ENCODE measurements at regions of chr12 and their contacts with region 1.

Region 1: DNA sequence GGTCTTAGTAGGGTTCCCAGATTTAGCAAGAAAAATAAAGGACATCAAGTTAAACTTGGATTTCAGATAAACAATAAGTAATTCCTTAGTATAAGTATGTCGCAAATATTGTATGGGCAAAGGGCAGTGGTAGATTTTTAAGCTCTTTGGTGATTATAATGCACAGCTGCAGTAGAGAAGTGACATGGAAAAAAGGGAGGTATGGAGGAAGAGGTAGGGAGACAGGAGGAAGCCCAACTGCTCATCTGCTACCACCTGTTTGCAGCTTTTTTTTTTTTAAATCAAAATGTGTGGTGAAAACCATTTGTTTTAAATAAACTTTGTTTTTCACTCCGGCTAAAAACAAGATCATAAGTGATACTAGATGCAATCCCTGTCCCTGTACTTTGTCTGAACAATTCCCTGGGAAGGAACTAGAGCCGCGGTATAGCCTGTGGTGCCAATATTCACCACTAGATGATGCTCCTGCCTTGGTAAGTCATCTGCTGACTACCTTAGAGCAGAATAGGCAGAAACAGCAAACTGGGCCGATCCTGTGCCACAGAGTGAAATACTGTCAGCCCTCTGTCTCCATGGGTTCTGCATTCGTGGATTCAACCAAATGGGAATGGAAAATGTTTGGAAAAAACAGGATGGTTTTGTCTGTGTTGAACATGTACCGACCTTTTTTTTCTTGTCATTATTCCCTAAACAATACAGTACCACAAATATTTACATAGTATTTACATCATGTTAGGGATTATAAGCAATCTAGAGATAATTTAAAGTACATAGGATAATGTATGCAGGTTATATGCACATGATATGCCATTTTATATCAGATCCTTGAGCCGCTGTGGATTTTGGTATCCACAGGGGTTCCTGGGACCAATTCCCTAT is 62.4 kb upstream of the PLBD1 start:
- DNase-seq: peak; percentile 25 to 71 (median 55)
- ATAC-seq: peak; percentile 99
- H3K4me3 ChIP-seq: no peak overlapping the region
- H3K4me3 Mint-ChIP-seq: no peak overlapping the region
- H3K27ac ChIP-seq: no peak overlapping the region
- H3K27ac Mint-ChIP-seq: no peak overlapping the region
- H3K4me1 ChIP-seq: no peaks in the 10 kb centered on the region
- H3K4me1 Mint-ChIP-seq: no peaks in the 10 kb centered on the region
- H3K27me3 ChIP-seq: no peaks in the 10 kb centered on the region
- H3K27me3 Mint-ChIP-seq: peaks cover 0 to 35% (median 7%) of the 10 kb centered on the region in 5 donors

Region 2: GRCh38 chr12:14643251-14643650 is 13.2 kb after region 1 on chr12:
- CTCF ChIA-PET with region 1: interaction called, 4 read pairs
- POLR2A ChIA-PET with region 1: no interaction called
- intact Hi-C with region 1: loop called in 1 of 2 experiments (anchors 2 kb)
- DNase-seq: peak in 6 of 9 donors; percentile 29 to 52 (median 42)
- ATAC-seq: peak; percentile 46
- H3K4me3 ChIP-seq: no peak overlapping the region
- H3K4me3 Mint-ChIP-seq: peak overlapping the region; percentile 35 to 79 (median 71)
- H3K27ac ChIP-seq: no peak overlapping the region
- H3K27ac Mint-ChIP-seq: peak overlapping the region; percentile 8 to 83 (median 54)
- H3K4me1 ChIP-seq: peaks cover 14 to 21% of the 10 kb centered on the region in 2 donors
- H3K4me1 Mint-ChIP-seq: peaks cover 15 to 26% (median 24%) of the 10 kb centered on the region in 7 donors
- H3K27me3 ChIP-seq: no peaks in the 10 kb centered on the region
- H3K27me3 Mint-ChIP-seq: peaks cover 0 to 9% (median 0%) of the 10 kb centered on the region in 5 donors

Region 3: DNA sequence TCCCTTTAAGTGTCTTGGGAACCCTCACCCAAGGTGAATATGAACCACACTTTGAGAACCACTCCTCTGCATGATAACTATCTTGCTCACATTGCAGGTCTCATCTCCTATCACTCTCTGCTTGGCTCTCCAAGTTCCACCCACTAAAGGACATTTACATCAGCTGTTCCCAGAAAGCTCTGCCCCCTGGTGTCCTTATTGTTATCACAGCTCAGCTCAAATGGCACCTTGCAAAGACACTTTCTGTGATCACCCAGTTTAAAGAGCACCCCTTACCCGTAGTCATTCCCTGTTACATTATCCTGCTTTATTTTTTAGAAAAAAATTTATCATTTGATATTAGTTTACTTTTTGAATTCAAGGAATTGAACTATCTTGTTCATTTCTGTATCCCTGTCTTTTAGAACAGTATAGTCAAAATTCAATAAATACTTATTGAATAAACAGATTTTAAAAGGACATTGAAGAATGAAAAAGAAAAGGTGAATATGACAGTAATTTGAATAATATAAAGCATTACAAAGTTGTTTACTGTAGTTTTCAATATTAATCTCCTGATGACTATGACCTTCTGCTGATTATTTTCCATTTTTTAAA is 86.9 kb after region 1 on chr12:
- CTCF ChIA-PET with region 1: interaction called, 6 read pairs
- POLR2A ChIA-PET with region 1: no interaction called
- intact Hi-C with region 1: loop called (anchors 1 kb)
- DNase-seq: peak; percentile 13 to 57 (median 45)
- ATAC-seq: peak; percentile 76
- H3K4me3 ChIP-seq: no peak overlapping the region
- H3K4me3 Mint-ChIP-seq: no peak overlapping the region
- H3K27ac ChIP-seq: no peak overlapping the region
- H3K27ac Mint-ChIP-seq: no peak overlapping the region
- H3K4me1 ChIP-seq: no peaks in the 10 kb centered on the region
- H3K4me1 Mint-ChIP-seq: peaks cover 0 to 6% (median 0%) of the 10 kb centered on the region in 7 donors
- H3K27me3 ChIP-seq: no peaks in the 10 kb centered on the region
- H3K27me3 Mint-ChIP-seq: peaks cover 0 to 23% (median 0%) of the 10 kb centered on the region in 5 donors

Region 4: DNA sequence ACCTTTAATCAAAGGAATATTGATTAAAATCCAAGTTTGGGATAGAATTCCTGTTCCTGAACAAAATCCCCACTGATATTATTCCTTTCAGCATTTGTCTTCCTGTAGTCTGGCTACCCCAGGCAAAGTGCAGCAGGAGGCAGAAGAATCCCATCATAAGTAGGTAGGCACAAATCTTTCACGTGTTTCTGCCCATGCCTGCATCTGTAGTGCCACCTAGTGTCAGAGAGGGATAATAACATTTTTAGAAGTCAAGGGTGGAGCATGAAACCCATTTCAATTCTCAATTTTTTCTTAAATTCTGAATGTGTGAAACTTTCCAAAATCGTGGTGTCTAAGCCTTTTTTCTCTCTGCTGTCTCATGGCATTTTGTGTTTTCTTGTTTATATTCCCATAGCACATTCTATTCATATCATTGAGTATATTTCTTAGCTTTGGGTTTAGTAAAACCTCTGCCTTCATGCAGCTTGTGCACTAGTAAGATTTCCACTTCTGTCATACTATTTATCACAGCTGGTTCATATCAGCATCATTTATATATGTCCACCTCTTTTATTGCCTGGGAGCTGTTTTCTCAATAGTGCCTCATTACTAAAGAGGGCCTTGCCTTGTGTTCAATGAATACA is 639.0 kb after region 1 on chr12:
- CTCF ChIA-PET with region 1: interaction called, 3 read pairs
- POLR2A ChIA-PET with region 1: no interaction called
- intact Hi-C with region 1: loop called in 1 of 2 experiments (anchors 1 kb)
- DNase-seq: peak in 7 of 9 donors; percentile 28 to 65 (median 56)
- ATAC-seq: peak; percentile 79
- H3K4me3 ChIP-seq: no peak overlapping the region
- H3K4me3 Mint-ChIP-seq: no peak overlapping the region
- H3K27ac ChIP-seq: no peak overlapping the region
- H3K27ac Mint-ChIP-seq: no peak overlapping the region
- H3K4me1 ChIP-seq: no peaks in the 10 kb centered on the region
- H3K4me1 Mint-ChIP-seq: no peaks in the 10 kb centered on the region
- H3K27me3 ChIP-seq: no peaks in the 10 kb centered on the region
- H3K27me3 Mint-ChIP-seq: peaks cover 2 to 11% (median 5%) of the 10 kb centered on the region in 5 donors